ENCODE measurements at regions of chr7 and their contacts with region 1.

Region 1: GRCh38 chr7:154497751-154498150 is 445.6 kb downstream of the DPP6 start:
- DNase-seq: no peak

Region 2: DNA sequence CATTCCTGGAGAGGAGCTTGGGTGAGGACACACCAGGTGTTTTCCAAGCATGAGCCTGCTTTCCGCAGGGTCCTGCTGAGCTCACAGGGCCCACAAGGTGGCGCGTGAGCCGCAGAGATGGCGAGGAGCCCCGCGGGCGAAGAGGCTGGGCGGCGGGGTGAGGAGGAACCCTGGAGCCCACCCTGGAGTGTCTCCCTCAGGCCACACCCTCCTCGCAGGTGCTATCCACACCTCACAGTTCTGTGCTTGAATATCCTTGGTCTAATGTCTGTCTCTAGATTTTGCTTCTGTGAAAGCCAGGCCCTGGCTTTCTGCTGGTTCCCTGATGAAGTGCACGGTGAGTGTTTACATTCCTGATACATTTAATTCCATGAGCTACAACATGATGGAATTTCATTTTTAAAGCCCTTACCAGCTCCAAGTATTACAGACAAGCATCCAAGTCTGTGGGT is 1304.6 kb before region 1 on chr7:
- intact Hi-C with region 1: loop called (anchors 10 kb)
- DNase-seq: peak; percentile 29 to 93 (median 60)

Region 3: GRCh38 chr7:154451480-154452457 is 46.0 kb before region 1 on chr7:
- intact Hi-C with region 1: no loop called
- DNase-seq: peak in 8 of 10 donors; percentile 36 to 91 (median 45)

Measured in posterior cingulate gyrus (tissue), 11 donors.